Astrocyte of the cerebellum (primary cell): ENCODE measurements at regions of chr1 and their contacts with region 1.

Region 1: GRCh38 chr1:27037515-27037914 is 24.9 kb upstream of the TENT5B start:
- DNase-seq: no peak
- H3K4me3 ChIP-seq: no peak overlapping the region
- CTCF ChIP-seq: no peak

Region 2: GRCh38 chr1:26949926-26950319 is 87.6 kb before region 1 on chr1:
- in situ Hi-C with region 1: no loop called
- DNase-seq: no peak
- H3K4me3 ChIP-seq: no peak overlapping the region
- CTCF ChIP-seq: no peak

Region 3: DNA sequence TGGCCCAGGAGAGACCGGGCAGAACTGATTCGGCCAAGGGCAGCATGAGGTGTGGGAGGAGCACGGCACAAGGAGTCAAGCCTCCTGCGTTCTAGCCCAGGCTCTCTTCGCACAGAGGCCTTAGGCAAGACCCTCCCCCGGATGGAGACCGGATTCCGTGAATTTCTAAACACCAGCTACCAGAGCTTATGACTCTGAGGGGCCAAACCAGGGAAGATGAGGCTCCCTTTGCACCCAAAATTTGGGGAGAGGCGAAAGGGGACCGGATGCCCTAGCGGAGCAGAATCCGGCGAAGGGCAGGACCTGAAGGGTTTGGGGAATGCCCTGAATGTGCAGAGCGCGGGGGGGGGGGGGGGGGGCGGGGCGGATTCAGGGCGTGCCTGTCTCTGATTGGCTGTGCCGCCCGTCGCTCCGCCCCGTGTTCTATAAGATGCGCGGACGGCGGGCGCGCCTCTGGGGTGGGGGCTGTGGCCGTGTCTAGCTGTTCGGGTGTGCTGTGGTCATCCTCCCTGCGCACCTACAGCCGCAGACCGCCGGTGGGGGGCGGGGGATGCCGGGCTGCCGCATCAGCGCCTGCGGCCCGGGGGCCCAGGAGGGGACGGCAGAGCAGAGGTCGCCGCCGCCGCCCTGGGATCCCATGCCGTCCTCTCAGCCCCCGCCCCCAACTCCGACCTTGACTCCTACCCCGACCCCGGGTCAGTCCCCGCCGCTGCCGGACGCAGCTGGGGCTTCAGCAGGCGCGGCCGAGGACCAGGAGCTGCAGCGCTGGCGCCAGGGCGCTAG is 44.1 kb before region 1 on chr1 and contains the start of gene TRNP1:
- in situ Hi-C with region 1: loop called (anchors 5 kb)
- DNase-seq: no peak
- H3K4me3 ChIP-seq: peak within 1 kb of the TSS; percentile 63
- CTCF ChIP-seq: no peak